Activated CD4-positive, alpha-beta memory T cell treated with anti-CD3 and anti-CD28 coated beads for 36 hours (primary cell): ENCODE measurements at regions of chr10 and their contacts with region 1.

Region 1: GRCh38 chr10:63614371-63614891 is 93.2 kb downstream of the REEP3 start:
- DNase-seq: no peak
- H3K4me3 Mint-ChIP-seq: no peak overlapping the region
- H3K27ac Mint-ChIP-seq: no peak overlapping the region
- H3K4me1 Mint-ChIP-seq: peaks cover 6% of the 10 kb centered on the region
- H3K27me3 Mint-ChIP-seq: no peaks in the 10 kb centered on the region

Region 2: DNA sequence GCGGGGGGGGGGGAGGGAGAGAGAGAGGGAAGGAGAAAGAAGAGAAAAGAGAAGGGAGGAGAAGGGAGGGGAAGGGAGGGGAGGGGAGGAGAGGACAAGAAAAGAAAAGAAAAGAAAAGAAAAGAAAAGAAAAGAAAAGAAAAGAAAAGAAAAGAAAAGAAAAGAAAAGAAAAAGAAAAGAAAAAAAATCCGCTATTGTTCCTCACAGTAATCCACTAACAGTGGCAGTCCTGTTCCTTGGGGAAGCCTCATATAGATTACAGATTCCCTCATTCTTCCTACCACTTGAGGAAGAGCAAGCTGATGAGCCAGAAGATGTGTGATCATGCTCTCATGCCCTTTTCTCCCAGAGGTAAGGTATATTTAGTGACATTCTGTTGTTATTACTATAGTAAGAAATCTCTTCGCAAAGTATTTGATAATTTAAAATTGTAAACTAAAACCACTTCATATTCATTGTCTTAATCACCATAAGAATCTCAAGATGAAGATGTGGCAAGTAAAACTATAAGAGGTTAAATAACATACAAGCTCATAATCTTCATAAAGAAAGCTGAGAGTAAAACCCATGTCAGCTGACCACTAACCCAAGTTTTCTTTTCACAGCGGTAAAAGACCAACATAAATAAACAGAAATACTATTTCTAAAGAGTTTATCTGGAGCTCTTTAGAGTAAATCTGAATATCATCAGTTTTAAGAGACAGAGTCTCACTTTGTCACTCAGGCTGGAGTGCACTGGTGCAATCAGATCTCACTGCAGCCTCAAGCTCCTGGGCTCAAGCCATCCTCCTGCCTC is 276.8 kb before region 1 on chr10:
- CTCF ChIA-PET with region 1: no interaction called
- POLR2A ChIA-PET with region 1: no interaction called
- intact Hi-C with region 1: no loop called
- DNase-seq: no peak
- H3K4me3 Mint-ChIP-seq: no peak overlapping the region
- H3K27ac Mint-ChIP-seq: no peak overlapping the region
- H3K4me1 Mint-ChIP-seq: no peaks in the 10 kb centered on the region
- H3K27me3 Mint-ChIP-seq: no peaks in the 10 kb centered on the region

Region 3: GRCh38 chr10:63651864-63652263 is 37.4 kb after region 1 on chr10:
- CTCF ChIA-PET with region 1: no interaction called
- POLR2A ChIA-PET with region 1: no interaction called
- intact Hi-C with region 1: loop called (anchors 2 kb)
- DNase-seq: no peak
- H3K4me3 Mint-ChIP-seq: no peak overlapping the region
- H3K27ac Mint-ChIP-seq: no peak overlapping the region
- H3K4me1 Mint-ChIP-seq: no peaks in the 10 kb centered on the region
- H3K27me3 Mint-ChIP-seq: peaks cover 2% of the 10 kb centered on the region